ENCODE measurements at regions of chr6 and their contacts with region 1.

Region 1: DNA sequence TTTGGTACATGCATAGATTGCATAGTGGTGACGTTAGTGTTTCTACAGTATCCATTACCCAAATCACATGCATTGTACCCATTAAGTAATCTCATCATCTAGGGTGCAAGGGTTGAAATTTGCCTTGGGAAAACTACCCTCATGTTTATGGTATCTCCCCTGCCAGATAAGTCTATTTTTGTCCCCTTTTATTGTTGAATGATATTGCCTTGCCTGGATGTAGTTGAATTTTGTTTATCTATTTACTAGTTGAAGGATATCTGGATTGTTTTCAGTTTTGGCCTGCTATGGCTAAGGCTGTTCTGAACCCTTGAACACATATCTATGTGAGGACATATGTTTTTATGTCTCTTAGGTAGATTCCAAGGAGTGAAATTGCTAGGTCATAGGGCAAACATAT is 13.4 kb downstream of the HLA-DRB1 start:
- DNase-seq: no peak
- H3K4me3 Mint-ChIP-seq: no peak overlapping the region
- H3K27ac Mint-ChIP-seq: no peak overlapping the region
- H3K4me1 Mint-ChIP-seq: no peaks in the 10 kb centered on the region
- H3K27me3 Mint-ChIP-seq: peaks cover 10% of the 10 kb centered on the region
- CTCF ChIP-seq: no peak

Region 2: DNA sequence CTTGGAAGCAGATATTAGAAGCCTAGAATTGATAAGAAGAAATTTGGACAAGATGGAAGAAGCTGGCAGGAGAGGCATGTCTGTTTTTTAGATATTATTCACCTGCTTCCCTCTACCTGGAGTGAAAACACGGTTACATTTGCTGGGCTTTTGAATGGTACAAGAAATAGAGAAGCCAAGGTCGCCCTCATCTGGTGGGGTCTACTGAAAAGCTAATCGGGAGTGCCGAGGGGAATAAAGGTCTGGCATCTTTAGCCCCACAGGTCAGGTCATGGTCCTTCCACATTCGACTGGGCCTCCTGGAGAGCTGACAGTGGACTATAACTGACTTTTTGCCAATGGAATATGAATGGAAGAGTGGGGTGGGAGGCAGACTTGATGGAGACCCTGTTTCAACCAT is 653.3 kb before region 1 on chr6:
- CTCF ChIA-PET with region 1: no interaction called
- intact Hi-C with region 1: no loop called
- DNase-seq: peak; percentile 53
- H3K4me3 Mint-ChIP-seq: no peak overlapping the region
- H3K27ac Mint-ChIP-seq: no peak overlapping the region
- H3K4me1 Mint-ChIP-seq: peaks cover 14% of the 10 kb centered on the region
- H3K27me3 Mint-ChIP-seq: no peaks in the 10 kb centered on the region
- CTCF ChIP-seq: no peak

Region 3: GRCh38 chr6:32483968-32484636 is 92.1 kb before region 1 on chr6:
- CTCF ChIA-PET with region 1: interaction called, 3 read pairs
- intact Hi-C with region 1: loop called (anchors 10 kb)
- DNase-seq: no peak
- H3K4me3 Mint-ChIP-seq: no peak overlapping the region
- H3K27ac Mint-ChIP-seq: no peak overlapping the region
- H3K4me1 Mint-ChIP-seq: no peaks in the 10 kb centered on the region
- H3K27me3 Mint-ChIP-seq: peaks cover 68% of the 10 kb centered on the region
- CTCF ChIP-seq: no peak

Measured in Calu3 (cell line).